Left colon (tissue), 2 donors: ENCODE measurements at regions of chr2 and their contacts with region 1.

Region 1: DNA sequence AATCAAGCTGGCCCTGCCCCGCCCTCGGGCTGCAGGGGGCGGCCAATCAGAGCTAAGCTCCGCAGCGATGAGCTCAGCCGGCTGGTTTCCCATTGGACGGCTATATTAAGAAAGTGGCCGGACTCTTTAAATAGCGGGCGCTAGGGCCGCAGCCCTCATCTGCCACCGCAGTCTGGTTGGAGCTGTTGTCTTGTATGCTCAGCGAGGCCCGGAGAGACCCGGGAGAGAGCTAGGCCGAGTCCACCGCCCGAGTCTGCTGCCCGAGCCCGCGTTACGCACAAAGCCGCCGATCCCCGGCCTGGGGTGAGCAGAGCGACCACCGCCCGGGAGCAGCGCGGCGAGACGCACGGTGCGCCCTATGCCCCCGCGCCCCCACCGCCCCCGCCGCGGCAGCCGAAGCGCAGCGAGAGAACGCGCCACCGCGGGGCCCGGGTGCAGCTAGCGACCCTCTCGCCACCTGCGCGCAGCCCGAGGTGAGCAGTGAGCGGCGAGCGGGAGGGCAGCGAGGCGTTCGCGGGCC is at the start of gene RHOB:
- DNase-seq: peak; percentile 95 to 97
- ATAC-seq: peak; percentile 82
- total RNA-seq, gene RHOB: 141 to 332 TPM

Region 2: DNA sequence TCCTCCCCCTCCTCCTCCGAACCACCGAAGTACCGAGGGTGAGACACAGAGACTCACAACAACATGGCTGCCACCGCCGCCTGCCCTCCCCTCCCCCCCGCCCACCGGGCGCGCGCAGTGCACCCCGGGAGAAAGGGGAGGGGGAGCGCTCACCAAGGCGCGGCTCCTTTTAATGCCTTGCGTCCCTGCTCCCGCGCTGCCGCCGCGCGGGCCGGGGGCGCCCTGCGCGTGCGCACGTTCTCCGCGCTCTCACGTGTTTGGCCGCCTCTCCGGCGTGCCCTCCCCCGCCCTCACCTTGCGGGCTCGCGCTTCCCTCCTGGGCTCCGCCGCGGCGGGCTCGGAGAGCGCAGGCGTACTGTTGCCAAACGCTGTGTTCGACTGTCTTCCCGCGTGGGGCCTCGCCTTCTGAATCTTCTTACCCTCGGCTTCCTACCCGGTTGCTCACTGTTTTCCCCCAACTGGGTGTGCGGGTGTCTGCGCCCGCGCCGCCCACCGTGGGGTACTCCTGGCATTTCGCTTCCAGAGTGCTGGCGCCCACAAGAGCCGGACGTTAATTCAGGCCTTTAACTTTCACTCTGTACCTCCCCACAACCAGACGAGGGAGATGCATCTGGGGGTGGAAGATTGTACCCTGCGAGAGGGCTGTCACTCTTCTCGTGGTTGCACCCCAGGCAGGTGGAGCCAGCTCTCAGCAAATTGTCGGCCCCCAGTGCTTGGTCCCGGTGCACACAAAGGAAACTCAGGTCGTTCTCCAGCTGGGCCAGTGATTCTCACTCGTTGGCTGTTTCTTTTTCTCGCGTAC is 96.0 kb before region 1 on chr2 and contains the start of gene PUM2:
- intact Hi-C with region 1: no loop called
- DNase-seq: peak; percentile 92 to 93
- ATAC-seq: peak; percentile 89
- total RNA-seq, gene PUM2: 99.4 to 109 TPM

Region 3: GRCh38 chr2:20635675-20636584 is 189.0 kb after region 1 on chr2:
- intact Hi-C with region 1: loop called (anchors 5 to 10 kb)
- DNase-seq: peak; percentile 76 to 87
- ATAC-seq: peak; percentile 62

Region 4: DNA sequence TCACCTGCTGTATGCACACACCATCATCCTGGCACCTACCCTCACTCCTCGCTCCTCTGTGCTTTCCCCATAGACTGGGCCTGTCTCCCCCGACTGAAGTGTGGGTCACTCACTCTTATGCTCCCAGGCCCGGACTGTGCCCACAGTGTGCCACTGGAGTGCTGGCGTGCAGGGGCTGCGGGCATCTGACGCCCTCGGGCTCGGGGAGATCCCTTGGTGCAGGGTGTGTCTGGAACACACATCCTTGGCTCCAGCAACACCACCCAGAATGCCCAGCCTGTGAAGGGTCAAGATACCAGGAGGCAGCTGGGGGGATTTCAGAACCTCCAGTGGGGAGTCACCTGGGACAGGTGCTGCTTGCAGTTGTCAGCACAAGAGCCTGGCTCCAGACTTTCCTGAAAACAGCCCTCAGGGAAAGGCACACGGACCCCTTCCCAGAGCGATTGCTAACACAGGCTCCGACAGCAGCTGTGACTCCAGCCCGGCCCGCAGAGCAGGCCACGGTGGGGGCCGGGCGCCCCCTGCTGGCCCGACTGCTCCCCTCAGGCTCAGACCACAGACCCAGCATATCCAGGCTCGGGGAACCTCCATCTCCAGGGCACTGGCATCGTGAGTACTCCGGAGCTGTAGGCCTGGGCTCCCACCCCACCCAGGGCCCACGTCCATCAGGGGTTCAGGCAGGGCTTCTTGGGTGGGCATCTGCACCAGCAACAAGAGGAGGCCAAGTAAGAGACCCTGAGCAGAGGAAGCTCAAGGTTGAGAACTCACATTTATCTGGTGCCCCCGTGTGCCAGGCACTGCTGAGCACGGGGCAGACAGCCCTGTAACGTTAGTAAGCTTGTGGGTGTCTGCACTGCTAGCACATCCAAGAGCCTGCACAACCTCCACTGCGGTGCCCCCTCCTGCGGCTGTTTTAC is 195.3 kb after region 1 on chr2:
- intact Hi-C with region 1: loop called (anchors 5 to 10 kb)
- DNase-seq: peak; percentile 54 to 80
- ATAC-seq: peak; percentile 93